Activated B cell treated with CpG ODN at 0.5 μM for 24 hours (primary cell): ENCODE measurements at regions of chr19 and their contacts with region 1.

Region 1: DNA sequence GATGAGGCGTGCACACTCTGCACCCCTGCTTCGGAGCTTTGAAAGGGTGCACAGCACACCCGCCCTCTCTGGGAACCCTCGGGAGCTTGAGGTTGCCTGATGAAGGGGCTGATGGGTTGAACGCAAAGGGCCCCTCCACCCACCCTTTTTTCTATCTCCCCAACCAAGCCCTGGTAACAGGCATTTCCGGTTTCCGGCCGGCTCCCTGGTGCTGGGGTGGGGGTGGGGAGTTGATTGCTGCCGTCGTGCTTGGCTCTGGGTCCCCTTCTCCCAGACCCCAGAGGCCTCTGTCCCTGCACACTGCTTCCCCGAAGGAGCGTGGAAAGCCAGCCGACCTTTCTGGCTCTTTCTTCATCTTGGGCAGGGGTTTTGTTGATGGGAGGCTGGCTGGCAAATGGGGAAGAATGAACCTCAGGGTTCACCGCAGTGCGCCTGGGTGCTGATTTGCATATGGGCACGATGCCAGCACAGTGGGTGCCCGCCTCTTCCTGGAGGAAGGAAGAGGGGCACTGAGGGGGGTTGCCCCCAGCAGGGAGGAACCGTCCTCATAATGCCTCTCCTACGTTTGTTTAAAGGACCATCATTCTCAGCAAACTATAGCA is 29.1 kb downstream of the VAV1 start:
- DNase-seq: peak; percentile 89
- ATAC-seq: peak; percentile 71
- H3K4me3 Mint-ChIP-seq: peak overlapping the region; percentile 83
- H3K27ac Mint-ChIP-seq: peak overlapping the region; percentile 94
- H3K4me1 Mint-ChIP-seq: peaks cover 83% of the 10 kb centered on the region
- H3K27me3 Mint-ChIP-seq: no peaks in the 10 kb centered on the region
- CTCF ChIP-seq: no peak

Region 2: DNA sequence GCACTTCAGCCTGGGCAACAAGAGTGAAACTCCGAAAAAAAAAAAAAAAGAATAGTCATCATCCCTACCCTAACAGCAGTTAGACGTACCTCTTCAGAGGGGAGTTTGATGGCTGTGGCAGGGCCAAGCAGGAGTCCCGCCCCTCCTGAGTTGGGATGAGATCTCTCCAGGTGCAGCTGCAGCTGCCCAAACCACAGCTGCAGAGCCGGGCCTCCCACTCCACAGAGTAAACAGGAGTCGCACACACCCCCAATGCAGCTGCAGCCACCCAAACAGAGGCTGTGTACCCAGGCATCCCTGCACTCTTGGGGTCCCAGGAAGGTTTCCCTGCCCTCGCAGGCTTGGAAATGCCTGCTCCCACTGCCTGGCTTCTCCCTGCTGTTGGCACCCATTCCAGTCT is 504.4 kb before region 1 on chr19:
- CTCF ChIA-PET with region 1: no interaction called
- POLR2A ChIA-PET with region 1: no interaction called
- intact Hi-C with region 1: no loop called
- DNase-seq: no peak
- ATAC-seq: no peak
- H3K4me3 Mint-ChIP-seq: no peak overlapping the region
- H3K27ac Mint-ChIP-seq: no peak overlapping the region
- H3K4me1 Mint-ChIP-seq: no peaks in the 10 kb centered on the region
- H3K27me3 Mint-ChIP-seq: peaks cover 5% of the 10 kb centered on the region
- CTCF ChIP-seq: no peak

Region 3: GRCh38 chr19:6723108-6723618 is 78.4 kb before region 1 on chr19:
- CTCF ChIA-PET with region 1: no interaction called
- POLR2A ChIA-PET with region 1: no interaction called
- intact Hi-C with region 1: no loop called
- DNase-seq: no peak
- ATAC-seq: no peak
- H3K4me3 Mint-ChIP-seq: no peak overlapping the region
- H3K27ac Mint-ChIP-seq: peak overlapping the region; percentile 50
- H3K4me1 Mint-ChIP-seq: peaks cover 56% of the 10 kb centered on the region
- H3K27me3 Mint-ChIP-seq: no peaks in the 10 kb centered on the region
- CTCF ChIP-seq: no peak

Region 4: DNA sequence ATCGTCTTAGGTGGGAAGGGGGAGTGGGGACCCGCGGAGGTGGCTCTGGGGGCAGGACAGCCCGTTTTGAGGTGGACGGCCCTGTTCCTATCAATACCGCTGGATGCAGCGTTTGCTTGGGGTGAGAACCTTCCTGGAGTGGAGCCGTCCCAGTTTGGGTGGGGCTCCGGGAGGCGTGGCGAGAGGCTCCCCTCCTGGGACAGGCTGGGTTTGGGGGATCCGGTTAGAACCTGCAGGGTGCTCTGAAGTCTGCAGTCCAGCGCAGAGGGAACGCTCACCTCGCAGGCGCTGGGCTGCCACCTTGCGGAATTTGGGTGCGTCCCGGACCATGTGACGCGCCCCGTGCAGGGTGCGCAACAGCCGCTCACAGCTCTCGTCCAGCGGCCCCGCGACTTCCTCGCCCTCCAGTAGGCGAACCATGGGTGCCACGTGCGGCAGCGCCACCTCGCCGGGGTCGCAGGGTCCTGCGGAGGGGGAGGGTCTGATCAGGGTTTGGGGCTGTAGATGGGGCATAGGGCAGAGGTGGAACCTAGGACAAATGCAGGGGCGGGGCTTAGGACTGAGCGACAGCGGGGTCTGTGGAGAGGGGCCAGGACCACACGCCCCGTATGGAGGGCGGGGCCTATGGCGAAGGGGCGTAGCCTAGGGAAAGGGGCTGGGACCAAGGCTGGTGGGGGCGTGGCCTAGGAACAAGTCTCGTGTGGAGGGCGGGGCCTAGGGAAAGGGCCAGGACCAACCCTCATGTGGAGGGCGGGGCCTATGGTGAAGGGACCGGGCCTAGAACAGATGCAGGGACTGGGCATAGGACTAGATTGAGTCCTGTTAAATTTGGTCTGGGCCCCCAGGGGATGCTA is 48.2 kb before region 1 on chr19:
- CTCF ChIA-PET with region 1: interaction called, 12 read pairs
- POLR2A ChIA-PET with region 1: interaction called, 19 read pairs
- intact Hi-C with region 1: loop called (anchors 1 kb)
- DNase-seq: peak; percentile 91
- ATAC-seq: peak; percentile 93
- H3K4me3 Mint-ChIP-seq: peak overlapping the region; percentile 87
- H3K27ac Mint-ChIP-seq: peak overlapping the region; percentile 82
- H3K4me1 Mint-ChIP-seq: peaks cover 33% of the 10 kb centered on the region
- H3K27me3 Mint-ChIP-seq: no peaks in the 10 kb centered on the region
- CTCF ChIP-seq: no peak

Region 5: GRCh38 chr19:6790194-6791128 is 11.1 kb before region 1 on chr19:
- CTCF ChIA-PET with region 1: no interaction called
- POLR2A ChIA-PET with region 1: interaction called, 10 read pairs
- intact Hi-C with region 1: no loop called
- DNase-seq: no peak
- ATAC-seq: no peak
- H3K4me3 Mint-ChIP-seq: no peak overlapping the region
- H3K27ac Mint-ChIP-seq: peak overlapping the region; percentile 50
- H3K4me1 Mint-ChIP-seq: peaks cover 49% of the 10 kb centered on the region
- H3K27me3 Mint-ChIP-seq: no peaks in the 10 kb centered on the region
- CTCF ChIP-seq: no peak

Region 6: GRCh38 chr19:6811906-6812305 is 10.3 kb after region 1 on chr19:
- CTCF ChIA-PET with region 1: interaction called, 3 read pairs
- POLR2A ChIA-PET with region 1: interaction called, 10 read pairs
- intact Hi-C with region 1: no loop called
- DNase-seq: no peak
- ATAC-seq: peak; percentile 34
- H3K4me3 Mint-ChIP-seq: no peak overlapping the region
- H3K27ac Mint-ChIP-seq: peak overlapping the region; percentile 21
- H3K4me1 Mint-ChIP-seq: peaks cover 58% of the 10 kb centered on the region
- H3K27me3 Mint-ChIP-seq: no peaks in the 10 kb centered on the region
- CTCF ChIP-seq: no peak

Region 7: DNA sequence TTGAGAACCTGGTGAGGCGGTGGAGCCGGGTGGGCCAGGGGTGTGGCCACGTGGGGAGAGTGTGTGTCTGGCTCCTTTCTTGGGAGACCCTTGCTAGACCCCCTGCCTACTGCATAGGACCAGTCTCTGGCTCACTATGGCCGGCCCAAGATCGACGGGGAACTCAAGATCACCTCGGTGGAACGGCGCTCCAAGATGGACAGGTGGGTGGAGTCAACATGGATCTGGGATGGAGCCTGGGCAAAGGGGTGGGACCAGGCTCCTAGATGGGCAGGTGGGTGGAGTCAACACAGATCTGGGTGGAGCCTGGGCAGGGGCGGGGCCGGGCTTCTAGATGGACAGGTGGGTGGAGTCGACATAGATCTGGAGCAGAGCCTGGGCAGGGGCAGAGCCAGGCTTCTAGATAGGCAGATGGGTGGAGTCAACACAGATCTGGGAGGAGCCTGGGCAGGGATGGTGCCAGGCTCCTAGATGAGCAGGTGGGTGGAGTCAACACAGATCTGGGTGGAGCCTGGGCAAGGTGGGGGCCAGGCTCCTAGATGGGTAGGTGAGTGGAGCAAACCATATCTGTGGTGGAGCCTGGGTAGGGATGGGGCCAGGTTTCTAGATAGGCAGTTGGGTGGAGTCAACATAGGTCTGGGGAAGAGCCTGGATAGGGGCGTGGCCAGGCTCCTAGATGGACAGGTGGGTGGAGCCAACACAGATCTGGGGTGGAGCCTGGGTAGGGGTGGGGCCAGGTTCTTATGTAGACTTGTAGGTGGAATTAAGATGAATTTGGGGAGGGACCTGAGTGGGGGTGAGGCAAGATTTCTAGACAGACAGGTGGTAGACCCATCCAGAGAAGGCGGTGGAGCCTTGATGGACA is 27.3 kb after region 1 on chr19:
- CTCF ChIA-PET with region 1: no interaction called
- POLR2A ChIA-PET with region 1: interaction called, 10 read pairs
- intact Hi-C with region 1: no loop called
- DNase-seq: no peak
- ATAC-seq: peak; percentile 80
- H3K4me3 Mint-ChIP-seq: no peak overlapping the region
- H3K27ac Mint-ChIP-seq: peak overlapping the region; percentile 35
- H3K4me1 Mint-ChIP-seq: peaks cover 6% of the 10 kb centered on the region
- H3K27me3 Mint-ChIP-seq: no peaks in the 10 kb centered on the region
- CTCF ChIP-seq: no peak